Heart left ventricle (tissue), 16 donors: ENCODE measurements at regions of chr6 and their contacts with region 1.

Region 1: DNA sequence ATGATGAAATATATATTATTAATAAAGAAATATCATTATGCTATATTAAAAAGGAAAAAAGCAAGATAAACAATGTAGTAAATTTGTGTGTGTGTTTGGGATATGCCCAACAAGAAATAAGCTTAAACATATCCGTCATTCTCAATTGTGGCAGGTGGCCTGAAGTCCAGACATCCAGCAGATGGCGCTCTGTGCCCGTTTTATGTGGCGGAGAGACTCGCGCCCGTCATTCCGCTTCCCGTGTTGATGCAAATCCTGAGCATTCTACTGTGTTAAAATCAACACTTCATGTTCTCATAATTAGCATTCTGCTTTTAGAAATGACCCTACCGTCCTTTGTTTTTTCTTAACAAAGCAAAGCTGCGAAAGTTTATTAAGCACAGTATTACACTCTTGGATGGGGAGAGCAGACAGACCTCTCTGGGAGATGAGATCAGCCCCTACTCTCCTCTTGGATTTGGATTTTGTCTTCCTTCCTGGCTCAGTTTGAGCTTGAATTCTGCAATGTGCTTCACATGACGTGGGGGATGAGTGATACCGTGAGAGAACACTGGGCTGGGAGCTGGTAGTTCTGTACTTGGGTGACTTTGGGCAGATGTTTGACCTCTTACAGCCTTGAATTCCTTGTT is 125.8 kb downstream of the MCHR2 start:
- DNase-seq: peak; percentile 38 to 79 (median 51)
- ATAC-seq: peak in 3 of 4 donors; percentile 50 to 80 (median 58)
- H3K4me3 ChIP-seq: no peak overlapping the region
- H3K27ac ChIP-seq: no peak overlapping the region
- H3K4me1 ChIP-seq: peaks cover 0 to 4% (median 0%) of the 10 kb centered on the region in 12 donors
- H3K27me3 ChIP-seq: peaks cover 0 to 11% (median 0%) of the 10 kb centered on the region in 9 donors
- CTCF ChIP-seq: peak; percentile 63 to 82 (median 72)
- POLR2A ChIP-seq: no peak

Region 2: GRCh38 chr6:99905209-99906106 is 37.3 kb after region 1 on chr6:
- intact Hi-C with region 1: loop called in 1 of 10 experiments (anchors 2 kb)
- DNase-seq: no peak
- ATAC-seq: no peak
- H3K4me3 ChIP-seq: no peak overlapping the region
- H3K27ac ChIP-seq: no peak overlapping the region
- H3K4me1 ChIP-seq: no peaks in the 10 kb centered on the region
- H3K27me3 ChIP-seq: peaks cover 0 to 5% (median 0%) of the 10 kb centered on the region in 9 donors
- CTCF ChIP-seq: peak; percentile 13 to 56 (median 42)
- POLR2A ChIP-seq: no peak

Region 3: GRCh38 chr6:99940582-99940981 is 72.4 kb after region 1 on chr6:
- intact Hi-C with region 1: no loop called
- DNase-seq: no peak
- ATAC-seq: no peak
- H3K4me3 ChIP-seq: no peak overlapping the region
- H3K27ac ChIP-seq: no peak overlapping the region
- H3K4me1 ChIP-seq: no peaks in the 10 kb centered on the region
- H3K27me3 ChIP-seq: peaks cover 0 to 8% (median 0%) of the 10 kb centered on the region in 9 donors
- CTCF ChIP-seq: no peak
- POLR2A ChIP-seq: no peak

Region 4: GRCh38 chr6:100099189-100100074 is 231.2 kb after region 1 on chr6:
- intact Hi-C with region 1: loop called in 9 of 10 experiments (anchors 2 to 5 kb)
- DNase-seq: no peak
- ATAC-seq: no peak
- H3K4me3 ChIP-seq: no peak overlapping the region
- H3K27ac ChIP-seq: no peak overlapping the region
- H3K4me1 ChIP-seq: no peaks in the 10 kb centered on the region
- H3K27me3 ChIP-seq: peaks cover 0 to 35% (median 0%) of the 10 kb centered on the region in 9 donors
- CTCF ChIP-seq: peak in 11 of 12 donors; percentile 16 to 60 (median 46)
- POLR2A ChIP-seq: no peak